GM10248 (cell line): ENCODE measurements at regions of chr5 and their contacts with region 1.

Region 1: GRCh38 chr5:137778772-137779564 is 24.8 kb upstream of the HNRNPA0 start:
- DNase-seq: peak; percentile 27
- CTCF ChIP-seq: peak; percentile 58

Region 2: GRCh38 chr5:137754126-137754960 is 24.6 kb before region 1 on chr5 and contains the start of gene HNRNPA0:
- CTCF ChIA-PET with region 1: interaction called, 64 read pairs
- POLR2A ChIA-PET with region 1: no interaction called
- DNase-seq: peak; percentile 96
- CTCF ChIP-seq: no peak

Region 3: DNA sequence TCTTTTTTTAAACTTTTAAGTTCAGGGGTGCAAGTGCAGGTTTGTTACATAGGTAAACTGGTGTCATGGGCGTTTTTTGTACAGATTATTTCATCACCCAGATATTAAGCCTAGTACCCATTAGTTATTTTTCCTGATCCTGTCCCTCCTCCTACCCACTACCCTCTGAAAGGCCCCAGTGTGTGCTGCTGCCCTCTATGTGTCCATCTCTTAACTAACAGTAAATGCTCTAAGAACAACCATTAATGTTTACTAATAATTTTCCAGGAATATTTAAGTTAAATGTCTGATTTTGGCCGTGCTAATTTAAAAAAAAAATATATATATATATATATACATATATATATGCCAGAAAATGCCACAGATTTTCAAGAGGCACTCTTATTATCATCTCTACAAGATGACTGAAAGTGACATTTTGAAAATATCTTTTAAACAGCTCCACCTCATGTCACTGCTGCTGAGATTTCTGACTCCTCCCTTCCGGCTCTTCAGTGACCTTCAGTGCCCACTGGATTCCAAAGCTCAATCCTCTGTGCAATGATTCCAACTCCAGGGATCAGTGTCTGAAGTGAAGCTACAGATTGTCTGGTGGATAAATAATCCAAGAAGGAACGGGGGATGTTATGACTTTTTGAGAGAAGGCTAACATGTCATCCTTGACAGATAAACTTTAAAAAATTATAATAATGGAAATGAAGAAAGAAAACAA is 21.9 kb after region 1 on chr5:
- CTCF ChIA-PET with region 1: interaction called, 26 read pairs
- POLR2A ChIA-PET with region 1: no interaction called
- DNase-seq: no peak
- CTCF ChIP-seq: no peak

Region 4: GRCh38 chr5:137822158-137822764 is 43.3 kb after region 1 on chr5:
- CTCF ChIA-PET with region 1: interaction called, 28 read pairs
- POLR2A ChIA-PET with region 1: no interaction called
- DNase-seq: peak; percentile 54
- CTCF ChIP-seq: peak; percentile 27

Region 5: DNA sequence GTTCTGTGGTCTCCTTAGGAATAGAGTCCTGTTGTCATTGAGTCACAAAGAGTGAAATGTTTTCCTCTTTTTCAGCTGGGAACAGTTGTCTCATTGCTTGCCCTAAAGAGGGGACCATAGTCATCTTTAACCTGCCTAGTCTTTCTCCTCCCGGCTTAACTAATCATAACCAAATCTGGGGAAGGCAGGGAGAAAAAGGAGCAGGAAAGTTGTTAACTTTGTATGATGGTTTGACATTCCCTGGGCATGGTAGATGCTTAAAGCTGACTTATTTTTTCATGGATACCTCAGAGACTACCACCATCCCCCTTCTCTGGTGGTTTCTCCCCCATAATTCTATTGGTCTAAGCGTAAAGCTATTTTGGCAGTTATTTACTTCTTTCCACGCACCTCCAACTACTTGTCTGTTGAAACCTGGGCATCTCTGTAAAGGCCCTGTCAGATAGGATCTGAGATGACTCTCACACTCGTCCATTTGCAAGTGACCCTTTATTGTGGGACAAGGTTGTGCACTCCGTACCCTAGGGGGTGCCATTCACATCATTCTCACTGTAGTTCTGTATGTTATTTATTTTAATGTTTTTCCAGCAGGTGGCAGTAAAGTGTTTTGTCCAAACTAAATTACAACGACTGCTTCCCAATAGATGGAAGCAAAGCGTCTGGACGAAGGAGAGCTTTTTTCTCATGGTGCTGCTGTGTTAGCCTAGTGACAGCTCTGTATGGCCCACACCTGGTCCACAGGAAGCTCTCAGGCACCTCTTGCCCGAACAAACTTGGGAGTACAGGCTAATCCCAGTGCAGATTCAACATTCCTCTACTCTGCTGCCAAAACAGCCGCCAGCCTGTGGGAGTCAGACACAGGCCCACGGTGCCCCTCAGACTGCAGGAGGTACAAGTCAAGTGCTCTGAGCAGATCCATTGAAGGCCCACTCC is 256.9 kb after region 1 on chr5:
- CTCF ChIA-PET with region 1: interaction called, 14 read pairs
- POLR2A ChIA-PET with region 1: no interaction called
- DNase-seq: peak; percentile 56
- CTCF ChIP-seq: peak; percentile 93

Region 6: GRCh38 chr5:138138949-138139780 is 360.2 kb after region 1 on chr5 and contains the start of gene NME5:
- CTCF ChIA-PET with region 1: interaction called, 13 read pairs
- POLR2A ChIA-PET with region 1: no interaction called
- DNase-seq: peak; percentile 73
- CTCF ChIP-seq: no peak